ENCODE measurements at regions of chr13 and their contacts with region 1.

Region 1: DNA sequence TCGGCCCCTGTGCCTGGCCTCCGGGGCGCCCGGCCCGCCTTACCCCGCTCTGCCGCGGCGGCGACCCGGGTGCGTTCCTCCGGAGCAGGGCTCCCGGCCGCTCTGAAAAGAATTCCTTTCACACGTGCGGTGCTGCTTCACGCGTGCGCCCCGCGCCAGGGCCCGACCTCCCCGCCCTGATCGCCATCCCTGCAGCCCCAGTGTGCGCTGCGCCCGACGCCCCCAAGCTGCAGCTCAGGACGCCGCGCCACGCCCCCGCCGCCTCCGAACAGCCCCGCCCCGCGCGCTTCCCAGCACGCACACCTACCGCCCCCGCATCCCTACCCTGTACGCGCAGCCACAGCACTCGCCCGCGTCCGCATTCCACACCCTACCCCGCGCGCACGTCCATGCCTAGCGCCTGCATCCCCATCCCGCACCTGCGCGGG is at the start of gene GJA3:
- DNase-seq: peak; percentile 57
- H3K4me3 Mint-ChIP-seq: peak within 1 kb of the TSS; percentile 76
- H3K27ac Mint-ChIP-seq: no peak within 1 kb of the TSS
- H3K4me1 Mint-ChIP-seq: peaks cover 8% of the 10 kb centered on the region
- H3K27me3 Mint-ChIP-seq: no peaks in the 10 kb centered on the region
- CTCF ChIP-seq: no peak
- total RNA-seq, gene GJA3: 3.0 and 4.7 TPM in 2 replicates

Region 2: DNA sequence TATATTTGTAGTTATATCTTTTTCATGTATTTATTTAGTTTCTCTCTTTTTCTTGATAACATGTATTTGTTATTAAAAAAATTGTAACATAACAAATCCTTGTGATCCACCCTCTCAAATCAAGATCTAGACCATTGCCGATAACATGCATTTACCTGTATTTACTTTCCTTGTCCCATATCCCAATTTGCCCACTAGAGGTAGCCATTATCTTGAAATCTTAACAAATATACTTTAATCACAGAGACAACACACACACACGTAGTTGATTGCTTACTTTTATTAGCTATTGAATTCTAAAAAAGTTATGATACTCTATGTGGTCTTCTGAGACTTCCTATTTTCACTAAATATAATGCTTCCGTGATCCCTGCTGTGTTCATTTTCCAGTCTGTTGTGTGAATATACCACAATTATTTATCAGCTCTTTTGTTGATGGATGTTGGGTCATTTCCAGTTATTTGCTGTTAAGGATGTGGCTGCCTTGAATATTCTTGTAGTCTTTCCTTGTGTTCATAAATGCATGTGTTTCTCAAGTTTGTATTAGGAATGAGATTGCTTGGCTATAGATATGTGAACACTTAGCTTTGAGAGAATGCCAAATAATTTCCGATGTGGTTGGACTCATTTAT is 233.6 kb before region 1 on chr13:
- CTCF ChIA-PET with region 1: interaction called, 11 read pairs
- POLR2A ChIA-PET with region 1: no interaction called
- intact Hi-C with region 1: loop called (anchors 1 kb)
- DNase-seq: peak; percentile 61
- H3K4me3 Mint-ChIP-seq: no peak overlapping the region
- H3K27ac Mint-ChIP-seq: no peak overlapping the region
- H3K4me1 Mint-ChIP-seq: peaks cover 6% of the 10 kb centered on the region
- H3K27me3 Mint-ChIP-seq: no peaks in the 10 kb centered on the region
- CTCF ChIP-seq: peak; percentile 52

Region 3: DNA sequence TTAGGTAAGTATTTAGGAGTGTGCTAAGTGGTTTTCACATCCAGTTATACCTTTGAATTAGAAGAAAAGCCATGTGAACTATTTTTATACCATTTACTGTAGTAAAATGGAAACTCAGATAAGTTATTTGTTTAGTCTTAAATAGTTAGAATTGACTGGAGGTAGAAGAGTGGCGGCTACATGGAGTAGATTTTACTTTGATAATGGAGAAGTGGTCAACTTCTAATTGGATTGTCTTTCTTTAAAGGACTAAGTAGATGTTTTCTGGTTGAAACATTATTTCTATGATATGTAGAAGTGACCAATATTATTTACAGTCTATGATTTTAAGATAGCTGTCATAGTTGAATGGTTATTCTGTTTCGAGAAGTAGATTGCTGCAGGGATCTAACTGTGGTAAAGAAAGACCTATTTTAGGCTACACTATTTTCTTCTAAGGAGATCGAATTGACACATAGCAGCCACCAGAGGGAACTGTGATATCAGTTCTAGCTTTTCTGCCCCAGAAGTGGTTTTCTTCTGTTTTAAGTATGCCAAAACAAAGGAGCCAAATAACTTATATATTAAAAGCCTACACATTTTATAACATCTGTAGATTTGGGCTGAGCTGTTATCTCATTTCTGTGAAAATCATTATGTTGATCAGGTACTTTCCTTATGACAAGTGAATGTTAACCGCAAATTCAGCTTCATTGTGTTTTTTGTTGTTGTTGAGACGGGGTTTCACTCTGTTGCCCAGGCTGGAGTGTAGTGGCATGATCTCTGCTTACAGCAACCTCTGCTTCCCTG is 176.2 kb before region 1 on chr13:
- CTCF ChIA-PET with region 1: interaction called, 17 read pairs
- POLR2A ChIA-PET with region 1: no interaction called
- intact Hi-C with region 1: loop called (anchors 1 kb)
- DNase-seq: peak; percentile 38
- H3K4me3 Mint-ChIP-seq: no peak overlapping the region
- H3K27ac Mint-ChIP-seq: no peak overlapping the region
- H3K4me1 Mint-ChIP-seq: no peaks in the 10 kb centered on the region
- H3K27me3 Mint-ChIP-seq: no peaks in the 10 kb centered on the region
- CTCF ChIP-seq: peak; percentile 60

Region 4: DNA sequence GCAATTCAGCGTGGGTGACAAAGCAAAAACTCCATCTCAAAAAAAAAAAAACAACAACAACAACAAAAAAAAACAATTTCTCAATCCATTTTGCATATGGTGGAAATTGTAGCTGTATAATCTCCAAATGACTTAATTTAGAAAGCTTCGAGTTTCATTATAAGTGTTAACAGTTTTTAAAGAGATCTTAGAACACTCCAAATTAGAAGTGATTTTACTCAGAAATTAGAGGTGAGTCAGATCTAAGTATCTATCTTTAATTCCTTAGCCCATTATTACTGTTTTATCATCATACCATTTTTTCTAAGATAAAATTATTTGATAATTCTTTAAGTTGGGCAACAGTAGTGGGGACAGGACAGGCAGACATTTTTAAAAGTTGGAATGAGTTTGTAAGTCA is 141.8 kb before region 1 on chr13:
- CTCF ChIA-PET with region 1: no interaction called
- POLR2A ChIA-PET with region 1: no interaction called
- intact Hi-C with region 1: no loop called
- DNase-seq: no peak
- H3K4me3 Mint-ChIP-seq: no peak overlapping the region
- H3K27ac Mint-ChIP-seq: no peak overlapping the region
- H3K4me1 Mint-ChIP-seq: peaks cover 13% of the 10 kb centered on the region
- H3K27me3 Mint-ChIP-seq: no peaks in the 10 kb centered on the region
- CTCF ChIP-seq: no peak

Region 5: GRCh38 chr13:20057963-20058362 is 102.9 kb before region 1 on chr13:
- CTCF ChIA-PET with region 1: interaction called, 5 read pairs
- POLR2A ChIA-PET with region 1: no interaction called
- intact Hi-C with region 1: loop called (anchors 1 kb)
- DNase-seq: no peak
- H3K4me3 Mint-ChIP-seq: no peak overlapping the region
- H3K27ac Mint-ChIP-seq: no peak overlapping the region
- H3K4me1 Mint-ChIP-seq: no peaks in the 10 kb centered on the region
- H3K27me3 Mint-ChIP-seq: no peaks in the 10 kb centered on the region
- CTCF ChIP-seq: peak; percentile 11

Region 6: GRCh38 chr13:20090349-20090748 is 70.5 kb before region 1 on chr13:
- CTCF ChIA-PET with region 1: interaction called, 18 read pairs
- POLR2A ChIA-PET with region 1: interaction called, 4 read pairs
- intact Hi-C with region 1: loop called (anchors 1 kb)
- DNase-seq: no peak
- H3K4me3 Mint-ChIP-seq: no peak overlapping the region
- H3K27ac Mint-ChIP-seq: no peak overlapping the region
- H3K4me1 Mint-ChIP-seq: no peaks in the 10 kb centered on the region
- H3K27me3 Mint-ChIP-seq: no peaks in the 10 kb centered on the region
- CTCF ChIP-seq: peak; percentile 18

Region 7: DNA sequence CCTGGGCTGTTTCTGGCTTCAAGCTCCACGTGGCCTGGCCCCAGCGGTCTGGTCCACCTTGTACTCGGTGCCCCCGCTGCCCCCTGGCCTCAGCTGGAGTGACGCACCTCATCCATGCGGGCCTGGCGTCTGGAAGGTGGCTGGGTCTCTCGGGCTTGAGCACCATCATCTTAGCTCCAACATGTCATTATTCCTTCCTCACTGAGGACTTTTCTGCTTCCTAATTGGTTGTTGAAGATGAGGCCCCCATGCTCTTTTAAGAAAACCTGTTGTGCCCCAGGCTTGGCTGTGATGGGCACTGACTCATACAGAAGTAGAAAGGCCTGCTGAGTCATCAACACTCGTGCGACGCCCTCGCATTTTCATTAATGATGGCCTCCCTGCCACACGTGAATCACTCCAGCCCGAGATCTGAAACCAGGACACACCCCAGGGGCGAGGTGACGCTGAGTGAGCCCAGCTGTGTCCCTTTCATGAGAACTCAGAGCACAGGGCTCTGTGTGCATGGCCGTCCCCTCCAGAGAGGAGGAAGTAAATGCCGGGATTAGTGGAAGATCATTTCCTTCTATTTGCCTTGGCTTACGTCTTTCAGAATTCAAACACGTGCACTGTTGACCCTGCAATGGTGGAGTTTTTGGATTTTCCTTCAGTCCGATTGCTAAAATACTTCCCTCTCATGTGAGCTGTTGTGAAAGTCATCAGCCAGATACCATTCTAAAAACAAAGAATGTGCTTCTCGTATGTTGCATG is 14.0 kb after region 1 on chr13:
- CTCF ChIA-PET with region 1: interaction called, 11 read pairs
- POLR2A ChIA-PET with region 1: interaction called, 3 read pairs
- intact Hi-C with region 1: no loop called
- DNase-seq: peak; percentile 97
- H3K4me3 Mint-ChIP-seq: peak overlapping the region; percentile 62
- H3K27ac Mint-ChIP-seq: peak overlapping the region; percentile 92
- H3K4me1 Mint-ChIP-seq: peaks cover 23% of the 10 kb centered on the region
- H3K27me3 Mint-ChIP-seq: no peaks in the 10 kb centered on the region
- CTCF ChIP-seq: no peak

Region 8: DNA sequence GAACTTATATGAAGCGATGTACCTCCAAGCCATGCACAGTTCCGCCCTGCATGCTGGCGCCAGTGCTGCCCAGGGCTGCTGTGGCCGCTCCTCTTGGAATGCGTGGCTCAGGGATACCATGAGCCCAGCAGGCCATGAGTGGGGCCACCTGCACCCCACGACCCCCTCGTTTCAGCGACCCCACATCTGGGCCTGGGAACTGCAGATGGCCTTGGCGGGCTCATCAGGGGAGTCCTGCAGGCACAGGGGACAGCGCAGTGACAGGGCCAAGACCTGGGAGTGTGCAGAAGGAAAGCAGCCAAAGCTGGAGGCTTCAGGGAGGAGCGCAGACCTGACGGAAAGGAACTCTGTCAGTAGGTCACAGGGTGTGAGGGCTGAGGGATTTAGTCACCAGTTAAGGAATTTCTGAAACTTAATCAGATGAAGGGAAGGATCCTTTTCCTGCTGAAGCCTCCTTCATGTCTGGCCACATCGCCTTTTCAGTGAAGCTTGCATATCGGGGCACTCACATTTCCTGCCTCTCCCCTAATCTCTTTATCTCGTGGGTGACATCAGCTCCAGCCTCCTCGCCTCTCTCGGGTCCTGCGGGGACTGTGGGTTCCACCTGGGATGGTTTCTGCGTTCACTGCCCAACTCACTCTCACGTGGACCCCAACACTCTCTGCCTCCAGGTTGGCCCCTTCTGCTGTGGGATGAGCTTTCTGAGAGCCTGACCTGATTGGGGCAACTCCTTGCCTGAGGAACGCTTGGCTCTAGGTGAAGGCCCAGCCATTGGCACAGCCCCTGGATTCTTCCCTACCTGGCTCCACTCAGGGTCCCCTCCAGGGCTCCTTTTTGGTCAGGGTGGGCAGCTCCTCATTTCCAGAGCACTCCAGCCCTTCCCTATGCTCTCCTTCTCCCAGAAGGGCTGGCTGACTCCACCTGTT is 241.3 kb after region 1 on chr13:
- CTCF ChIA-PET with region 1: no interaction called
- POLR2A ChIA-PET with region 1: no interaction called
- intact Hi-C with region 1: no loop called
- DNase-seq: no peak
- H3K4me3 Mint-ChIP-seq: no peak overlapping the region
- H3K27ac Mint-ChIP-seq: no peak overlapping the region
- H3K4me1 Mint-ChIP-seq: peaks cover 7% of the 10 kb centered on the region
- H3K27me3 Mint-ChIP-seq: no peaks in the 10 kb centered on the region
- CTCF ChIP-seq: no peak

Region 9: GRCh38 chr13:20654156-20654555 is 493.3 kb after region 1 on chr13:
- CTCF ChIA-PET with region 1: no interaction called
- POLR2A ChIA-PET with region 1: no interaction called
- intact Hi-C with region 1: no loop called
- DNase-seq: no peak
- H3K4me3 Mint-ChIP-seq: no peak overlapping the region
- H3K27ac Mint-ChIP-seq: no peak overlapping the region
- H3K4me1 Mint-ChIP-seq: no peaks in the 10 kb centered on the region
- H3K27me3 Mint-ChIP-seq: no peaks in the 10 kb centered on the region
- CTCF ChIP-seq: no peak